A549 (cell line): ENCODE measurements at regions of chr10 and their contacts with region 1.

Region 1: DNA sequence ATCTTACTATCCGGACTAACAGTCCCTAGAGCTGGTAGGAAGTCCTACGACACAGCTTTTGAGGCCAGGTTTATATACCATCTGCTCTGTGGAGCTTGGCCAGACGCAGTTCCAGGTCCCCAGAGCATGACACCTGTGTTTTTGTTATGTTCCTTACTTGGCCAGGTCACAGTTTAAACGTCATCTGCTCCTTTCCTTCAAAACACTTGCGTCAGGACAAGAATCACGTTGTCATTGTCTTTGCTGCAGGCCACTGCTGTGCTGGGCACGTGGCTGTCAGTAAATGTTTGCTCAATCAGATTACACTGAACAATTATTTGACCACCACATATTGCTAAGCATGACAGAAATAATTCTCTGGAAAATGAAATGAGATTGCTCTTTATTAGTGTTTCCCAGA is 23.9 kb downstream of the SLC18A2 start:
- DNase-seq: no peak
- ATAC-seq: no peak
- H3K4me3 ChIP-seq: no peak overlapping the region
- H3K27ac ChIP-seq: no peak overlapping the region
- H3K4me1 ChIP-seq: no peaks in the 10 kb centered on the region
- CTCF ChIP-seq: no peak
- EP300 ChIP-seq: no peak
- POLR2A ChIP-seq: no peak
- RAD21 ChIP-seq: no peak

Region 2: DNA sequence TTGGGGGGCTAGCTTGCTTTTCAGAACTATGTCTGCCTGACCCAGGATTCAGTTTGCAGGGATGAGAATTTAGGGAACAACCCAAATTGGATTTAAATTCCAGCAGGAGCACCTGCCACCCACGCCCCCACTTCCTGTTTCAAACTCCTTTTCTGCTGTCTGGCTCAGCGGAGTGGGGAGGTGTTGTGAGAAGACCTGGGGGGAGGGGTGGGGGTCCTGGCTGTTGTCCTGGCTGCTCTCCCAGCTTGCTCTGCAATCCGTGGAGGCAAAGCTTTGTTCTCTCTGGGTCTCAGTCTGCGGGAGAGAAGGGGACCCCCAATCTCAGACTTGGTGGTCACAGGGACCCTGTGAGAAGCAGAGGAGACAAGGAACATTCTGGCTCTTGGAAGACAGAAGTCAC is 66.7 kb before region 1 on chr10:
- CTCF ChIA-PET with region 1: no interaction called
- POLR2A ChIA-PET with region 1: no interaction called
- DNase-seq: no peak
- ATAC-seq: no peak
- H3K4me3 ChIP-seq: no peak overlapping the region
- H3K27ac ChIP-seq: no peak overlapping the region
- H3K4me1 ChIP-seq: no peaks in the 10 kb centered on the region
- CTCF ChIP-seq: no peak
- EP300 ChIP-seq: no peak
- POLR2A ChIP-seq: no peak
- RAD21 ChIP-seq: no peak

Region 3: DNA sequence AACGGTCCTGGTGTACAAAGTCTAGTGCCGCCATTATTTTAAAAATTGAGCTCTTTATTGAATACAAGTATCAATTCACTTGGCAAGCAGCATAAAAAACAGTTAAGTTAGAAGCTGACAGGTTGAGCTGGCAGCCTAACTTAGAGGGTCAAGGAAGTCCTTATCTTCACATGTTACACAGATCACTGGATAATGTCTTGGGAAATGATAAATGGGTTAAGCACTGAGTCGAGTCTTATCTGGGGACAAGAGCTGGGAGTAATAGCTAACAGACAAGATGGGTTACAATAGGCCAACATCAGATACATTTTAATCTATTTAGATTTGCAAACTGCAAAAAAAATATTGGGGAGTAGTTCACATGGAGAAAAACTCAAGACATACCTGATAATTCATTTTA is 10.3 kb after region 1 on chr10:
- CTCF ChIA-PET with region 1: interaction called, 10 read pairs
- POLR2A ChIA-PET with region 1: no interaction called
- DNase-seq: no peak
- ATAC-seq: no peak
- H3K4me3 ChIP-seq: no peak overlapping the region
- H3K27ac ChIP-seq: no peak overlapping the region
- H3K4me1 ChIP-seq: peaks cover 10% of the 10 kb centered on the region
- CTCF ChIP-seq: no peak
- EP300 ChIP-seq: no peak
- POLR2A ChIP-seq: no peak
- RAD21 ChIP-seq: no peak

Region 4: DNA sequence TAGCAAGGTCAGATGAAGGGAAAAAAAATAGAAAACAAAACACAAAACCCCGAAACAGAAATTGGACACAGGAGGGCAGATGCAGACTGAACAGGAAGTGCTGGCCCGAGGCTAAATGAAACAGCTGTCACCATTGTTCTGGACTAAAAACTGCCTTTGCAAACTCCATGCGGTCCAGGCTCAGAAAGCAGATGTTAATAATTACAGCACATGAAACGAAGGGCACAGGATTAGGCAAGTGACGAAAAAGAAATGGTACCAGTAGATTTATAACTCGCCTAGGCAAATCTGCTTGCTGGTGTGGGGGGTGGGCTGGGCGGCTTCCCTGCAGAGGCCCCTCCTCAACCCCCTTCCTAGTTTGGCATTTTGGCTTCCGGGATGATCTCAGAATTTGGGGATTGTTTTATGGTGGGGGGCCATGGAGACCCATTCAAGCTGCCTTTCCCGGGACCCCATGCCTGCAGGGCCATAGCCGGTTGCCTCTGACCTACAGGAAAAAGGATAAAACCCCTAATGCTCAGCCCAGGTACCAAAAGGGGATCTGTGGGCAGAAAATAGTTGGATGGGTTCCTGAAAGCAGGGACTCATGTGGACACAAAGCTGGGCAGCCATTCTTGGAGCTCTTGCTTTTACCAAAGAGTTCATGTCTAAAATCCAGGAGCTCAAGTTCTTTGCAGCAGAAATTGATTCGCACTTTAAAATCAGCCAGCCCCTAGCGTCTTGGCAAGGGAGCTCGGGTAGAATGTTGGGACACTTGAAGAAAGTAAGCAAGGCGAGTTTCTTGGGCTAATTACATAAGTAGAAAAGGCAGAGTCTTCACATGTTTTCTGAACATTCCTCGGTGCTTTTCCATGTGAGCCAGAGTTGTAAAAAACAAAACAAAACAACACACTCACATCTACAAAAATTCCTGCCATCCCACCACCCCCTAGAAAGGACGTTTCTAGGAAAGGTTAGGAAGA is 238.7 kb after region 1 on chr10:
- CTCF ChIA-PET with region 1: no interaction called
- POLR2A ChIA-PET with region 1: no interaction called
- DNase-seq: no peak
- ATAC-seq: no peak
- H3K4me3 ChIP-seq: no peak overlapping the region
- H3K27ac ChIP-seq: no peak overlapping the region
- H3K4me1 ChIP-seq: no peaks in the 10 kb centered on the region
- CTCF ChIP-seq: no peak
- EP300 ChIP-seq: no peak
- POLR2A ChIP-seq: no peak
- RAD21 ChIP-seq: no peak